Activated T-helper 2 cell treated with anti-CD3 and anti-CD28 coated beads, Interferon-gamma antibody, Interleukin-2, Interleukin-4, amounts not matched to agents 10 μg/mL and 5 μg/mL and 100 μg/mL, durations not matched to agents 14 hours and 24 hours and 36 hours (primary cell): ENCODE measurements at regions of chr20 and their contacts with region 1.

Region 1: GRCh38 chr20:10553326-10553984 is 118.3 kb downstream of the SLX4IP start:
- DNase-seq: no peak
- H3K4me3 Mint-ChIP-seq: no peak overlapping the region
- H3K27ac Mint-ChIP-seq: no peak overlapping the region
- H3K4me1 Mint-ChIP-seq: peaks cover 43% of the 10 kb centered on the region
- H3K27me3 Mint-ChIP-seq: peaks cover 7% of the 10 kb centered on the region

Region 2: GRCh38 chr20:10647465-10647864 is 94.0 kb after region 1 on chr20:
- intact Hi-C with region 1: loop called (anchors 5 kb)
- DNase-seq: no peak
- H3K4me3 Mint-ChIP-seq: no peak overlapping the region
- H3K27ac Mint-ChIP-seq: no peak overlapping the region
- H3K4me1 Mint-ChIP-seq: peaks cover 10% of the 10 kb centered on the region
- H3K27me3 Mint-ChIP-seq: peaks cover 21% of the 10 kb centered on the region

Region 3: DNA sequence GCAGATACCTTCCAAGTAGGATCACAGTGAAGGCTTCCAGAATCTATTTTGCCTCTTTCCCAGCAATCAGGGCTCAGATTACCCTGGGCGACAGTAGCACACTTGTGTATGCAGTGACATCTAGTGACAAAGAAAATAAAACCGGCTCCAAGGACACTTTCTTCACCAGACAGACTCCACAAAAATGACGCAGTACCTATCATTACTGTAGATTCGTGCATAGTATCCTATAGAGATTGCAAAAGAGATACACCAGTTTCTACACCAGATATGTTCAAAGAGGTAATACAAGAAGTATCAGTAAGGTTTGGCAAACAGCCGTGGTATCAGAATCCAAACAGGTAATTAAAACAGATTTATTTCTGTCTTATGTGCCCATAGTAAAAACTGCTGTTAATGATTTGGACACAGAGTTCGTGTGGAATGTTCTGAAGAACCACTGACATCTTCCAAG is 720.7 kb after region 1 on chr20:
- intact Hi-C with region 1: loop called (anchors 5 kb)
- DNase-seq: no peak
- H3K4me3 Mint-ChIP-seq: no peak overlapping the region
- H3K27ac Mint-ChIP-seq: no peak overlapping the region
- H3K4me1 Mint-ChIP-seq: no peaks in the 10 kb centered on the region
- H3K27me3 Mint-ChIP-seq: no peaks in the 10 kb centered on the region

Region 4: DNA sequence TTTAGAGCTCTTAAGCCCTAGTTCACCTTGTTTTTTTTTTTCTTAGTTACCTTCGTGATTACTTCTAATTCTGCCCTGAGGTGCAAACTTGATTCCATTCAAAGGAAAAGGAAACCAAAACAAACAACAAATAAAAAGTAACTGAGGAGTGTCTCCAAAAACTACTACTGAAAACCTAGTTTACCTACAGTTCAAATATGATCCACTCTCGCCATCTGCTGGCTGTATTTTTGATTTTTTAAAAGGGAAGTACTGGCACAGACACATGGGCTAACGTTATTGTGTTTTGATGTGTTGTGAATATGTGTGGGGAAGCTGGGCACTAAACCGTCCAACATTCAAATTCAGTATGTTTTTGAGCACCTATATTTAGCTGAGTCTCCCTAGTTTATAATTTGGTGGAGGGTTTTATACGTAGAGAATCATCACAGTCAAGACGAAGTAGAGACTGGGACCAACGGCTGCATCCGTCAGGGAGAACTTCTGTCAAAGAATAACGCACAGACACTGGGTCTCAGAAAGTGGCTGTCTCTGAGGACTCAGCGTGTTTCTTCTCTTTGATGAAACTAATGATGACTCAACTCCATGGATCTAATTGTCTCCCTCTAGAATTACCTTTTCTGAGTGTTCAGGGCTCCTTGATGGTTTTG is 990.7 kb after region 1 on chr20:
- intact Hi-C with region 1: loop called (anchors 5 kb)
- DNase-seq: no peak
- H3K4me3 Mint-ChIP-seq: no peak overlapping the region
- H3K27ac Mint-ChIP-seq: no peak overlapping the region
- H3K4me1 Mint-ChIP-seq: no peaks in the 10 kb centered on the region
- H3K27me3 Mint-ChIP-seq: no peaks in the 10 kb centered on the region